SK-MEL-5 (cell line): ENCODE measurements at regions of chr9 and their contacts with region 1.

Region 1: DNA sequence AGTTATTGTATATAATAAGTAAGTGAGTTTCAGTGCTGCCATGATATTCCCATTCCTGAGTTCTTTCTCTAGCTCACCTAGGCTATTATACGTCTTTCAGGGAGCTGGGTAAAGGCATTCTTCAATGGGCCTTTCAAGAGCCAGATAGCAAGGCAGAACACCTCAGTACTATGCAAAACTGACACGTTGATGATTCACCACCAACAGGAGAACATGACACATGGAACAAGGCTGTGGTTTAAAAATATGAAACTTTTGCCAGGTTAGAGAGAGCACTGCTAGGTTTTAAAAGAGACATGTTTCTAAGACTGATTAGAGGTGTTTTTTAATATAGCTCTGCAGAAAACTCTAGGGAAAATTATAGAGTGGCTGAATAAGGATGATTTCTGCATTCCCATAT is 95.9 kb downstream of the UGCG start:
- DNase-seq: no peak

Region 2: GRCh38 chr9:111952559-111952958 is 40.0 kb before region 1 on chr9:
- in situ Hi-C with region 1: loop called (anchors 5 kb)
- DNase-seq: no peak